ENCODE measurements at regions of chr1 and their contacts with region 1.

Region 1: DNA sequence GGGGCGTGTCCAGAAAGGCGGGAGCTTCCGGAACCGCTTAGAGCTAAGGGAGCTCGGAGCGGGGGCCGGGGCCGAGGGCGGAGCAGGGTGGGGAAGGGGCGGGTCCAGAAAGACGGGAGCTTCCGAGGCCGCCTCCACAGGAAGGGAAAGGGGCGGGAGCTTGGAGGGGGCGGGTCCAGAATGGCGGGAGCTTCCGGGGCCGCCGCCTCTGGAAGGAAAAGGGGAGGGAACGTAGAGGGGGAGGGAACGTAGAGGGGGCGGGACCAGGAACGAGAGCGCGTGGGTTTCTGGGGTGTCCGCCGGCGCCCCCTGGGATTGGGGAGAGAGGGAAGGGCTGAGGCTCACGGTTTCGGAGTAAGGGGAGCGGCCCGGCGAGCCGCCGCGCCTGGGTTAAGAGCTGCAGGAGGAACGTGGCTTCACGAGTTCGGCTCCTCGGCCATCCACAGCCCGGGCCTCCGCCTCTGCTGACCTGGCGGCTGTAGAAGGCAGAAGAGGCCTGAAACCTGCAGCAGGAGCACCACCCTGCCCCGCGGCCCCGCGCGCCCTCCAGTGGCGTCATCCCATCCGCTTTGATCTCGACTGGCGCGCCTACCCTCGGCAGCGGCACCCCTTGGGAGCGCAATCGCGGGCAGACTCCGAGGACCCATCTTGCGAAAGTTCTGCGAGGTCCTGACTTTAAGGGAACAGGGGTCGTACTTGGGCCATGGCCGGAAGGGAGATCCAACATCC is 22.9 kb upstream of the HPDL start:
- DNase-seq: peak; percentile 100
- H3K4me3 Mint-ChIP-seq: peak overlapping the region; percentile 91
- H3K27ac Mint-ChIP-seq: peak overlapping the region; percentile 94
- H3K4me1 Mint-ChIP-seq: peaks cover 33% of the 10 kb centered on the region
- H3K27me3 Mint-ChIP-seq: no peaks in the 10 kb centered on the region

Region 2: GRCh38 chr1:44721485-44722361 is 582.0 kb before region 1 on chr1:
- CTCF ChIA-PET with region 1: no interaction called
- intact Hi-C with region 1: loop called (anchors 1 kb)
- DNase-seq: peak; percentile 90
- H3K4me3 Mint-ChIP-seq: peak overlapping the region; percentile 66
- H3K27ac Mint-ChIP-seq: peak overlapping the region; percentile 98
- H3K4me1 Mint-ChIP-seq: peaks cover 83% of the 10 kb centered on the region
- H3K27me3 Mint-ChIP-seq: no peaks in the 10 kb centered on the region

Region 3: GRCh38 chr1:44835738-44836675 is 467.7 kb before region 1 on chr1:
- CTCF ChIA-PET with region 1: interaction called, 15 read pairs
- intact Hi-C with region 1: loop called (anchors 1 kb)
- DNase-seq: peak; percentile 98
- H3K4me3 Mint-ChIP-seq: no peak overlapping the region
- H3K27ac Mint-ChIP-seq: no peak overlapping the region
- H3K4me1 Mint-ChIP-seq: peaks cover 5% of the 10 kb centered on the region
- H3K27me3 Mint-ChIP-seq: peaks cover 9% of the 10 kb centered on the region

Region 4: DNA sequence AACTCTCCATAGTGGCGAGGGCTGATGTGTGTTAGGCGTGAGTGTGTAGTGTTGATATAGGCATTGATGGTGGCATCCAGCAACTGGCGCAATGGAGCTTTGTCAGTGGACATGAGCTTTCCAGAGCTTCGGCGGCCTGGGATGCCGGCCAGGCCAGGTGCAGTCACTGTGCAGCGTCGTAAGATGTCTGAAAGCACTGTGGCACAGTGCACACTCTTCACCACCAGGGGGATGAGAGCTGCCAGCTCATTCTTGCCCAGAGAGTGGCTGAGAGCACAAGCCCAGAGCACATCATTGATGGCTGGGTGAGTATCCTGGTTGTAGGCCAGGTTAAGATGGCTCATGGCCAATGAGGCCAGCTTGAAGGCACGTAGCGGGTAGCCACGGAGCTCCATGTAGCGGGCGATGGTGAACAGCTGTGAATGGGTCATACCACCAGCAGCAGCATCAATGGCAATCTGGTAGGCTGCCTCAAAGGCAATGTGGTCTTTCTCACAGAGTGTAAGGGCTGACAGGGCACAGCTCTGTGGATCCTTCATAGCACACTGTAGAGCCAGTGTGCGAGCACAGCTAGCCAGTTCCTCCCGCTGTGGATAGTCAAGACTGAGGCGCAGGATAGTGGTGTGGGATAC is 285.0 kb before region 1 on chr1:
- CTCF ChIA-PET with region 1: interaction called, 155 read pairs
- intact Hi-C with region 1: loop called (anchors 1 kb)
- DNase-seq: peak; percentile 81
- H3K4me3 Mint-ChIP-seq: no peak overlapping the region
- H3K27ac Mint-ChIP-seq: no peak overlapping the region
- H3K4me1 Mint-ChIP-seq: peaks cover 13% of the 10 kb centered on the region
- H3K27me3 Mint-ChIP-seq: no peaks in the 10 kb centered on the region

Region 5: GRCh38 chr1:45177452-45177851 is 126.3 kb before region 1 on chr1:
- CTCF ChIA-PET with region 1: no interaction called
- intact Hi-C with region 1: no loop called
- DNase-seq: no peak
- H3K4me3 Mint-ChIP-seq: no peak overlapping the region
- H3K27ac Mint-ChIP-seq: no peak overlapping the region
- H3K4me1 Mint-ChIP-seq: no peaks in the 10 kb centered on the region
- H3K27me3 Mint-ChIP-seq: no peaks in the 10 kb centered on the region

Region 6: GRCh38 chr1:45326627-45327623 is 23.2 kb after region 1 on chr1 and contains the start of gene HPDL:
- CTCF ChIA-PET with region 1: interaction called, 4 read pairs
- intact Hi-C with region 1: loop called (anchors 1 kb)
- DNase-seq: peak; percentile 74
- H3K4me3 Mint-ChIP-seq: peak within 1 kb of the TSS; percentile 79
- H3K27ac Mint-ChIP-seq: peak within 1 kb of the TSS; percentile 46
- H3K4me1 Mint-ChIP-seq: peaks cover 26% of the 10 kb centered on the region
- H3K27me3 Mint-ChIP-seq: no peaks in the 10 kb centered on the region
- total RNA-seq, gene HPDL: 10.7 to 11.1 TPM

Region 7: GRCh38 chr1:45550401-45551351 is 246.9 kb after region 1 on chr1 and contains the start of gene AKR1A1:
- CTCF ChIA-PET with region 1: no interaction called
- intact Hi-C with region 1: loop called (anchors 1 kb)
- DNase-seq: peak; percentile 93
- H3K4me3 Mint-ChIP-seq: peak within 1 kb of the TSS; percentile 96
- H3K27ac Mint-ChIP-seq: peak within 1 kb of the TSS; percentile 94
- H3K4me1 Mint-ChIP-seq: peaks cover 19% of the 10 kb centered on the region
- H3K27me3 Mint-ChIP-seq: no peaks in the 10 kb centered on the region
- total RNA-seq, gene AKR1A1: 207 to 217 TPM